ENCODE measurements at regions of chr12 and their contacts with region 1.

Region 1: DNA sequence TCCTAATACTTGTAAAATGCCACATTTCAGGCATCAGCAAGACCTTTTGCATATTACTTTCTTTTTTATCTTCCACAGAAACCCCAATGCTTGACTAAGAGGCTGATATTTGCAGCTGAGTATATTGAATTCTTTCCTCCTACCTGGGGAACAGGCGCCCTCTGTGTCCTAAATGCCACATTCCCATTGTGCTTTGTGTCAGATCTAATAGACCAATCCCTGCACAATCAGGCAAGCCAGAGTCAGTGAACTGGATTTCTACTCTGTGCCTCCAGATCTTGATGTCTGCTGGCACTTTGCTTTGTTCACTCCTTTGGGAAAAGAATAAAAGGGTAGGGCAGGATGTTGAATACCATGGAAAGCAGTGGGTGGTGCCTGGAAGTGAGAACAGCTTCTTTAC is 22.4 kb upstream of the TAS2R42 start:
- DNase-seq: no peak

Region 2: GRCh38 chr12:10779103-10779502 is 430.0 kb before region 1 on chr12:
- intact Hi-C with region 1: loop called in 1 of 2 experiments (anchors 5 kb)
- DNase-seq: no peak

Measured in posterior vena cava (tissue), 2 donors.